AG04449 (cell line): ENCODE measurements at regions of chr2 and their contacts with region 1.

Region 1: GRCh38 chr2:16608661-16609643 is 56.7 kb downstream of the CYRIA start:
- DNase-seq: no peak
- H3K4me3 ChIP-seq: peak overlapping the region; percentile 57
- CTCF ChIP-seq: peak; percentile 88

Region 2: GRCh38 chr2:15630121-15630977 is 978.6 kb before region 1 on chr2:
- CTCF ChIA-PET with region 1: interaction called, 122 read pairs
- POLR2A ChIA-PET with region 1: no interaction called
- DNase-seq: no peak
- H3K4me3 ChIP-seq: no peak overlapping the region
- CTCF ChIP-seq: no peak

Region 3: DNA sequence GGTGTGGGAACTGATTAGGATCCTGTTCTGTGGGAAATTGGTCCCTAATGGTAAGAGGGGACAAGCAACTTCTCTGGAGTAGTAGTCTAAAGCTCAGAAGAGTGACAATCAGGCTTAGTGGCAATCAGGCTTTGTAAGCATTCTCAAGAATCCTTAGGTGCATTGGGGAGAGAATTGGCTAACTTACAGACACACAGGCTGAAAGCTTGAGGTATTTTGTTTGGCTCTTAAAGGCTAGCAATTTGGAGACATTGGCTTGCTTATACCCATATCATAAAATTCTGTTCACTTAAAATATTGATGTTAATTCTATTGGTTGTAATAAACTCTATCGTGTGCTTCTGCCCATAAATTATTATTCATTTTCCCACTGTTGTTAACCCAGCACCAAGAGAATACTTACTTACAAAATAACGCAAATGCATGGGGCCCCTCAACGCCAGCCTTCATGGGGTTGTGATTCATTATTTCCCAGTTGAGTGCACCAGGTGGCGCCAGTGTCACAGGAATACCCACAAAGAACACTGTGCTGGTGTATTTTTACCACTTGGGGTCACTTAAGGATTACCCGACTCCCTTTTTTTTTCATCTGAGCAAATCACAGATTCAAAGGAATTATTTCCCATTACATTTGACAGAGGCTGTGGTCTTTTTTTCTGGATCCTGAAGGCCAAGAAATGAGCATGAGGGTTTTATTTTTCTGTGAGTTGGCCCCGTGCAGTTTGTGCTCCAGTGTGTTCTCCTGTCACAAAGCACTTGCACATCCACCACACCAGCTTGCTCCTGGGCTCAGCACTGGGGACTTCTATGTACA is 971.8 kb before region 1 on chr2:
- CTCF ChIA-PET with region 1: interaction called, 122 read pairs
- POLR2A ChIA-PET with region 1: no interaction called
- DNase-seq: peak; percentile 29
- H3K4me3 ChIP-seq: no peak overlapping the region
- CTCF ChIP-seq: peak; percentile 81

Region 4: GRCh38 chr2:15642011-15642814 is 966.7 kb before region 1 on chr2:
- CTCF ChIA-PET with region 1: interaction called, 122 read pairs
- POLR2A ChIA-PET with region 1: no interaction called
- DNase-seq: no peak
- H3K4me3 ChIP-seq: no peak overlapping the region
- CTCF ChIP-seq: no peak

Region 5: DNA sequence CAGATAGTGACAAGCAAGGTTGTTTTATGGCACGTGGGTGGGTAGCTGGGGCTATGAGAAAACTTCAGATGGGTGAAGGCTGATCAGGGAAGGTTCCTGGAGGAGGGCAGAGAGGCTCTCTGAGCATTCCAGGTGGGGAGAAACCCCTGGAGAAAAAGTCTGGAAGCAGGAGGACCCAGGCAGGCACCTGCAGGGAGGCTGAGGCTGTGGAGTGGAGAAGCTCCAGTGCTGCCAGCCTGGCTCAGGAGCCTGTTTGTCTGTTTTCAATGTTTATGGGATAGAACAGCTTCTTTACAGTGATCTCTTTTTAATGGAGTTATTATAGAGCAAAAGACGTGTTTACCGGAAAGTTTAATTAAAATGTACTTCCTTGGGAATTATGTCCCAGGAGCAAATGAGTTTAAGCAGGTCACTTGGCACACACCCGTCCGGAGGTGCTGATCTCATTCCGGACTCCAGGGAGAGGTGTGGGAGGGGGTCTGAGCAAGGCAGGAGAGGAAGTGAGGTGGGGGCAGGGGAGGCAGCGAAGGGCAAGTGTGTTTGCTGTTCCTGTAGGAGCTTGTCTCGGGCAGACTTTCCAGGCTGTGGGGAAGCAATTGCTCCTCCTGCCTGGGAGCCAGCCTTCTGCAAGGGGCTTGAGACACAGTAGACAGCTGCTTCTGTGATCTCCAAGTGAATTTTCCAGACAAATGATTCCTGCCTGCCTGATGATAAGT is 429.1 kb before region 1 on chr2:
- CTCF ChIA-PET with region 1: no interaction called
- POLR2A ChIA-PET with region 1: no interaction called
- DNase-seq: no peak
- H3K4me3 ChIP-seq: no peak overlapping the region
- CTCF ChIP-seq: no peak

Region 6: DNA sequence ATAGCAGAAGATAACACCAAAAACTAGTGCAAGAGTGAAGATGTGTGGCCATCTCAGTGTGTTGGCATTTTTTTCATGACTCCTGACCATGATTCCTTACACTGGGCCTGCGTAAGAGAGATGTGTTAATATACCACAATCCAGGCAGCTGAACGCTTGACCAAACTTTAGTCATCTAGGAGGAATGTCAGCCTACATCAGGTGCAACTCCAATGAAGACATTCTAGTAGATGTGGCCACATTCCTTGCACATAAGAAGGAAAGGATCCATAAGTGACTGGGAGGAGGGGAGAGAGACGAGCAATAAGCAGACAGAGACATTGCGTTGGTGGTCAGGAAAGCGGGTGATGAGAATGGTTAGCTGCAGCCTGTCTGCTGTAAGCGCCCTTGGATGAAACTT is 14.1 kb after region 1 on chr2:
- CTCF ChIA-PET with region 1: interaction called, 17 read pairs
- POLR2A ChIA-PET with region 1: no interaction called
- DNase-seq: no peak
- H3K4me3 ChIP-seq: no peak overlapping the region
- CTCF ChIP-seq: no peak